Pancreas (tissue), 10 donors: ENCODE measurements at regions of chr22 and their contacts with region 1.

Region 1: GRCh38 chr22:29040385-29041275 is 21.0 kb downstream of the C22orf31 start:
- DNase-seq: peak in 4 of 6 donors; percentile 55 to 76 (median 62)
- ATAC-seq: peak; percentile 83 to 91 (median 90)
- H3K4me3 ChIP-seq: no peak overlapping the region
- H3K27ac ChIP-seq: peak overlapping the region in 2 of 4 donors; percentile 14 to 15
- H3K4me1 ChIP-seq: peaks cover 0 to 16% (median 0%) of the 10 kb centered on the region in 3 donors
- H3K27me3 ChIP-seq: no peaks in the 10 kb centered on the region
- CTCF ChIP-seq: peak; percentile 91 to 96 (median 94)

Region 2: GRCh38 chr22:28855355-28856094 is 185.1 kb before region 1 on chr22:
- intact Hi-C with region 1: loop called in 1 of 3 experiments (anchors 5 kb)
- DNase-seq: peak in 3 of 6 donors; percentile 21 to 69 (median 45)
- ATAC-seq: peak; percentile 84 to 98 (median 92)
- H3K4me3 ChIP-seq: no peak overlapping the region
- H3K27ac ChIP-seq: no peak overlapping the region
- H3K4me1 ChIP-seq: no peaks in the 10 kb centered on the region
- H3K27me3 ChIP-seq: no peaks in the 10 kb centered on the region
- CTCF ChIP-seq: peak; percentile 71 to 92 (median 78)

Region 3: GRCh38 chr22:28864878-28865596 is 175.6 kb before region 1 on chr22:
- intact Hi-C with region 1: loop called in 1 of 3 experiments (anchors 5 kb)
- DNase-seq: peak in 1 of 6 donors; percentile 17
- ATAC-seq: peak in 3 of 4 donors; percentile 70 to 94 (median 91)
- H3K4me3 ChIP-seq: no peak overlapping the region
- H3K27ac ChIP-seq: peak overlapping the region in 1 of 4 donors; percentile 39
- H3K4me1 ChIP-seq: peaks cover 0 to 11% (median 11%) of the 10 kb centered on the region in 3 donors
- H3K27me3 ChIP-seq: no peaks in the 10 kb centered on the region
- CTCF ChIP-seq: no peak